ENCODE measurements at regions of chr5 and their contacts with region 1.

Region 1: GRCh38 chr5:114120166-114120565 is 241.7 kb upstream of the KCNN2 start:
- DNase-seq: no peak
- H3K4me3 ChIP-seq: no peak overlapping the region
- H3K27ac ChIP-seq: no peak overlapping the region
- H3K4me1 ChIP-seq: no peaks in the 10 kb centered on the region
- H3K27me3 ChIP-seq: no peaks in the 10 kb centered on the region
- CTCF ChIP-seq: no peak
- EP300 ChIP-seq: no peak
- POLR2A ChIP-seq: no peak

Region 2: DNA sequence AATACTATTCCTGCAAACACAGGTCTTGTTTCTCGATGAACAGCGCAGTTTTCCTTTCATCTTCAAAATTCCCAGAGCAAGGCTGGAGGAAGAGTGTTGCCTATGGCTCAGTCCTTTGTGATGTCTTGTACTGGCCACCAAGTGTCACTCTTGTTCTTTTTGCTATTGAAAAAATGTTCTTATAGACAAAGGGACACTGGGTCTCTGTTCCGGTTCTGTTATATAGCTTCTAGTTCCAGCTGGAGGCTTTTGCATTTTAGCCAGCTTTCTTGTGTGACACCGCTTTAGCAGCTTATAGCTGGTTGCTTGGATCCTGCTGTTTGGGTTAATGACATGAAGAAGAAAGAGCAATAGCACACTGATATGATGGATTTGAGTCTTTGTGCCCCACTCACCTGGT is 102.0 kb before region 1 on chr5:
- intact Hi-C with region 1: no loop called
- DNase-seq: no peak
- H3K4me3 ChIP-seq: no peak overlapping the region
- H3K27ac ChIP-seq: no peak overlapping the region
- H3K4me1 ChIP-seq: no peaks in the 10 kb centered on the region
- H3K27me3 ChIP-seq: no peaks in the 10 kb centered on the region
- CTCF ChIP-seq: no peak
- EP300 ChIP-seq: no peak
- POLR2A ChIP-seq: no peak

Region 3: GRCh38 chr5:115231598-115231997 is 1111.4 kb after region 1 on chr5:
- intact Hi-C with region 1: loop called in 1 of 4 experiments (anchors 10 kb)
- DNase-seq: no peak
- H3K4me3 ChIP-seq: no peak overlapping the region
- H3K27ac ChIP-seq: no peak overlapping the region
- H3K4me1 ChIP-seq: no peaks in the 10 kb centered on the region
- H3K27me3 ChIP-seq: no peaks in the 10 kb centered on the region
- CTCF ChIP-seq: no peak
- EP300 ChIP-seq: no peak
- POLR2A ChIP-seq: no peak

Measured in ovary (tissue), 10 donors.